Activated T-helper 2 cell treated with anti-CD3 and anti-CD28 coated beads, Interferon-gamma antibody, Interleukin-2, Interleukin-4, amounts not matched to agents 10 μg/mL and 5 μg/mL and 100 μg/mL, durations not matched to agents 14 hours and 24 hours and 36 hours (primary cell): ENCODE measurements at regions of chr12 and their contacts with region 1.

Region 1: DNA sequence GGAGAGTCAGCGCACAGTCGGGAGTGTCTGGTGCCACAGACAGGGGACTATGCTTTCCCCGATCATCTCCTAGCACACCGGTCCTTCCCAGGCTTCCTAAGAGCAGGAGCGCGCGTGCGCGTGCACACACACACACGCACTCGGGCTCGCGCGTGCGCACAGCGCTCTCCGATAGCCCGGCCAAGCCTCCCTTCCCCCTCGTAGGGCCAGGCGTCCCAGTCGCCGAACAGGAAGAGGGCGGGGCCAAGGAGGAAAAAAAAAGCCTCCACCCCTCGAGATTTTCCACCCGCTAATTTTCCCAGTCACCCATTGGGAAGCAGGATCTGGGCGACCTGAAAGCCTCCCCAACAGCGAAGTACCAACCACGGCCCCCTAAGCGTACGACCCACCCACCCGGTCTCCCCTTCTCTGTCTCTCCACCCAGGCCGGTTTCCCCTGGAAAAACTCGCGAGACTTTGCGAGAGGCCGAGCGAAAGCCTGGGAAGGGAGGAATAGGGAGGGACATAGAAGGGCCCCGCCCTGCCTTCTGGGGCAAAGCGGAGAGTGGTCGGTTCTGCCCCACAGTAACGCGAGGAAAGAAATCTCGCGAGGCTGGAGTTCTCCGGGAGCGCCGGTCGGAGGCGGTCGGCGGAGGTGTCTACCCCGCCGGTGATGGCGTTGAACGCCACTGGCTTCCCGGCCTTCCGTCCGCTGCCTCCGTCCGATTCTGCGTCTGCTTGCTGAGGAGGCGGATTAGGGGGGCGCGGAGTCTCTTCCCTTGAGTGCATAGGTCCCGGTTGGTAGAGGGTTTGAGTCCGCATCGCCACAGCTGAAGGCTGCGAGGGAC is at the starts of genes FGFR1OP2 and INTS13:
- DNase-seq: peak; percentile 96
- H3K4me3 Mint-ChIP-seq: peak within 1 kb of the TSS; percentile 94
- H3K27ac Mint-ChIP-seq: peak within 1 kb of the TSS; percentile 94
- H3K4me1 Mint-ChIP-seq: peaks cover 62% of the 10 kb centered on the region
- H3K27me3 Mint-ChIP-seq: no peaks in the 10 kb centered on the region
- total RNA-seq, gene FGFR1OP2: 48.4 and 49.0 TPM in 2 replicates
- total RNA-seq, gene INTS13: 54.4 and 65.7 TPM in 2 replicates

Region 2: GRCh38 chr12:26732005-26732908 is 205.8 kb before region 1 on chr12:
- intact Hi-C with region 1: loop called (anchors 5 kb)
- DNase-seq: no peak
- H3K4me3 Mint-ChIP-seq: no peak overlapping the region
- H3K27ac Mint-ChIP-seq: no peak overlapping the region
- H3K4me1 Mint-ChIP-seq: peaks cover 50% of the 10 kb centered on the region
- H3K27me3 Mint-ChIP-seq: no peaks in the 10 kb centered on the region

Region 3: DNA sequence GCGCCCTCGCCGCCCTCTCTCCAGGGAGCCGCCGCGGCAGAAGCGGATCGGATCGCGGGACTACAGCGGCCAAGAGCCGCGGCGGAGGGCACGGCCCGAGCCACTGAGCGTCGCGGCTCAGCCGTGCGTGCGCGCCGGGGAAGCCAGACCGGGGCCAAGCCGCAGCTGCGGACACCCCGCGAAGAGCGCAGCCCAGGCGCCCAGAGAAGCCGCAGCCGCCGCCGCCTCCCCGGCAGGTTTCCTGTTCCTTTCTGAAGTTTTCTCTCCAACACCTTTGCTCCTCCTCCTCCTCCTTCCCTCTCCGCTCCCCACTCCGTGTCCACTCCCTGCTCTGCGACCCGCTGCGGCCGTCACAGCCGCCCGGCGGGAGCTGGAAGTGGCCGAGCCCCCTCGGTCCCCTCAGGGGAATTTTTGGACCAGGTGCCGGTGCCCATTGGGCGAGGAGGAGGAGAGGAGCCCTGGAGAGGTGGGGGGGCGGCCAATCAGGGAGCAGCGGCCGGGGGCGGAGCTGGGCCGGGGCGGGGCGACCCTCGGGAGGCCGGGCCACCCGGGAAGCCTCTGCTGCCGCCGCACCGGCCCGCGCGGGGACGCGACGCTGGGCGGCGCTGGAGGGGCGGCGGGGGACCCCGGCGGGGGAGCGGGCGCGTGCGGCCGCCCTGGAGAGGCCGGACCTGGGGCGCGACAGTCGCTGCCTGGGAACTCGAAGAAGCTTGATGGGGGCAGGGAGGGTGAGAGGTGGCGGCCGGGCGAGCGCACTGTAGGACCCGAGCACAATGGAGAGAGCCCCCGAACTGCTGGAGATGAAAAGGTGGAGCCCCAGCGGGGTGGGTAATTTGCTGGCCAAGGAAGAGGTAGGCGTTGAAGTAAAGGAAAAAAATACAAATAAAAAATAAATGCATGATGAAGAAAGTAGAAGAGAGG is 105.0 kb before region 1 on chr12 and contains the start of gene ITPR2:
- intact Hi-C with region 1: loop called (anchors 1 kb)
- DNase-seq: peak; percentile 88
- H3K4me3 Mint-ChIP-seq: peak within 1 kb of the TSS; percentile 95
- H3K27ac Mint-ChIP-seq: peak within 1 kb of the TSS; percentile 98
- H3K4me1 Mint-ChIP-seq: peaks cover 46% of the 10 kb centered on the region
- H3K27me3 Mint-ChIP-seq: no peaks in the 10 kb centered on the region
- total RNA-seq, gene ITPR2: 49.3 and 49.6 TPM in 2 replicates

Region 4: GRCh38 chr12:26971963-26972362 is 33.9 kb after region 1 on chr12:
- intact Hi-C with region 1: loop called (anchors 1 kb)
- DNase-seq: peak; percentile 14
- H3K4me3 Mint-ChIP-seq: no peak overlapping the region
- H3K27ac Mint-ChIP-seq: peak overlapping the region; percentile 29
- H3K4me1 Mint-ChIP-seq: peaks cover 16% of the 10 kb centered on the region
- H3K27me3 Mint-ChIP-seq: no peaks in the 10 kb centered on the region

Region 5: GRCh38 chr12:27179400-27180214 is 241.5 kb after region 1 on chr12:
- intact Hi-C with region 1: loop called (anchors 1 kb)
- DNase-seq: peak; percentile 28
- H3K4me3 Mint-ChIP-seq: peak overlapping the region; percentile 49
- H3K27ac Mint-ChIP-seq: peak overlapping the region; percentile 80
- H3K4me1 Mint-ChIP-seq: peaks cover 49% of the 10 kb centered on the region
- H3K27me3 Mint-ChIP-seq: no peaks in the 10 kb centered on the region

Region 6: DNA sequence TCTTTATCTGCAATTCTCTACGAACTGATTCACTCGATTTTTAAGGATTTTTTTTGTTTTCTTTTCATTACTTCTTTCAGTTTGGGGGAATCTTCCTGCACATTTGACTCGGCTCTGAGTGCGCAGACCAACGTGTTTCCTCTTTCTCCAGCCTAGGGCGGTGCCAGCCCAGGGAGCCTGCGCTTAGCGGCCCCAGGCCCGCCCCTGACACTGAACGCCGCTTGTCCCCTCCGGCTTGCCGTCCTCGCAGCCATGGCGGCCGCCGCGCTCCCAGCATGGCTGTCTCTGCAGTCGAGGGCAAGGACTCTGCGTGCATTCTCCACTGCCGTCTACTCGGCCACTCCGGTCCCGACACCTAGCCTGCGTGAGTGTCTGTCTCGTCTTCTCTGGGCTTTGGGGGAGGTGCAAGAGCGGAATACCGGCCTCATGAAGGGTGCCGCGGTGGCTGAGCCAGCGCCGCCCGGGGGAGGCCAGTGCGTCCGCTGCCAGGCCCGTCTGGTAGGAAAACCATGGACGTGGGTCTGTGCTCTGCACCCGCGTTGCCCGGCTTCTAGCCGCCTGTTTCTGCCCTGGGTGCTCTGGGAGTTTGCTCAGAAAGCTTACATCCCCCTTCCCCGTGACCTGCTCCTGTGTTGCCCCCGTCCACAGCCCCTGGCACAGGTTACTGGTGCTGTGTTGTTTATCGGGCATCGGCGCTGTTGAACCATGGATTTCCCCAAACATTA is 772.7 kb after region 1 on chr12 and contains the start of gene MRPS35:
- intact Hi-C with region 1: loop called (anchors 1 kb)
- DNase-seq: peak; percentile 90
- H3K4me3 Mint-ChIP-seq: peak within 1 kb of the TSS; percentile 95
- H3K27ac Mint-ChIP-seq: peak within 1 kb of the TSS; percentile 94
- H3K4me1 Mint-ChIP-seq: peaks cover 21% of the 10 kb centered on the region
- H3K27me3 Mint-ChIP-seq: peaks cover 7% of the 10 kb centered on the region
- total RNA-seq, gene MRPS35: 53.6 and 54.0 TPM in 2 replicates